Ovary (tissue), 10 donors: ENCODE measurements at regions of chr4 and their contacts with region 1.

Region 1: DNA sequence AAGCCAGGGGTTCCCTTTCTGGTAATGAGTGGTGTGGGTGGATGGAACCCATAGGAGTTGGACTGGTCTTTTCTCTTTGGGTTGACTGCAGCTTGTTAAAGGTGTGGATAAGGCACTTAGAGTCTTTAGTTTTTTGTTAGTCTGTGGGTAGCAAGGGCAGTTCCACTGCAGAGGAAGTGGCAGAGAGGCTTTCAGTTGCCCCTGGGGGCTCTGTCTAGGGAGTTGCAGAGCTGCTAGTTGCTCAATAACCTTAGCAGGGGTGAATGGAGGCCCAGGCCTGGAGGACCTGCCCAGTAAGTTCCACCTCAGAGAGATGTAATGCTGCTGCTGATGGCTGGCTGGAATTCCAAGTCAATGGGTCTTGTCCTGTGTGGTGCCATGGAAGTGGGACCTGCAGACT is 282.6 kb upstream of the NDST4 start:
- DNase-seq: no peak
- H3K4me3 ChIP-seq: no peak overlapping the region
- H3K27ac ChIP-seq: no peak overlapping the region
- H3K4me1 ChIP-seq: no peaks in the 10 kb centered on the region
- H3K27me3 ChIP-seq: no peaks in the 10 kb centered on the region
- CTCF ChIP-seq: no peak
- EP300 ChIP-seq: no peak
- POLR2A ChIP-seq: no peak

Region 2: GRCh38 chr4:115418635-115419396 is 22.8 kb after region 1 on chr4:
- intact Hi-C with region 1: loop called in 1 of 4 experiments (anchors 1 kb)
- DNase-seq: no peak
- H3K4me3 ChIP-seq: no peak overlapping the region
- H3K27ac ChIP-seq: no peak overlapping the region
- H3K4me1 ChIP-seq: no peaks in the 10 kb centered on the region
- H3K27me3 ChIP-seq: no peaks in the 10 kb centered on the region
- CTCF ChIP-seq: no peak
- EP300 ChIP-seq: no peak
- POLR2A ChIP-seq: no peak